Posterior vena cava (tissue), 2 donors: ENCODE measurements at regions of chr2 and their contacts with region 1.

Region 1: GRCh38 chr2:98664327-98664726 is 55.9 kb downstream of the UNC50 start:
- DNase-seq: no peak

Region 2: DNA sequence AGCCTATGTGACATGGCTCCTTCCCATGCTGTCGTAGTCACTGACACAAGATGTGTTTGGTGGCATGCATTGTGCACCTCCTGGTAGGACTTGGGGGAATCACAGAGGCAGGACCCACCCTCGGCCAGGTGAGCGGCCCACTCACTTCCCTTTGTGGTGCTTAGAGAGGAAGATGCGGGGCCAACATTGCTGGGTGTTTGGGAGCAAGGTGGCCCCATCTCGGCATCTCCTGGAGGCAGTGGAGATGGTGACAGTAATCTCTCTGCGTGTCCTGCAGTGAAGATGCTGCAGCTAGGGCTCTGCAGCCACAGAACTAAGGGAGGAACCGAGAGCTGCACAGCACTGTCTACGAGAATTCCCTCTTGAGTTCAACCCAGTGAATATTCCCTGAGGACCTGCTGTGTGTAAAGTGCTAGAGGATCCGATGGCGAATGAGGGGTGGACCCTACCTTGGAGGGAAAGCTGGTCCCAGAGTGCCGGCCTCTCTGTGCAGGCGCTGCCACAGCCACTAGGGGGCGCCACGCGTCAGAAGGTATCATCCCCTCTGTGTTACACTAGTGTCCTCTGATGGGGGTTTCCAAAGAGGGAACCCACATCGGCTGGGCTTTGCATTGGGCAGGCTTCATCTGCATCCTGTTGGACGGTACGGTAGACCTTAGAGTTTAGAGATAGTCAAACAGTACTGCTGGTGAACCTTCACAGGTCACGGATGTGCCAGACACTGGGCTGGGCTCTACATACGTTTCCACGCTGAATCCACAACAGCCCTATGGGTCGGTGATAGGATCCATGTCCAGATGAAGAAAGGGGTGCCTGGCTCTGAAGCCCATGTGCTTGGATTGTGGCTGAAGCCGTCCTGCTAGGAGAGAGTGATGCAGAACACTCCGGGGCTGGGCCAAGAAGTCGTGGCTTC is 95.2 kb before region 1 on chr2:
- intact Hi-C with region 1: no loop called
- DNase-seq: peak; percentile 88

Region 3: GRCh38 chr2:98787700-98788099 is 123.4 kb after region 1 on chr2:
- intact Hi-C with region 1: no loop called
- DNase-seq: peak; percentile 29

Region 4: DNA sequence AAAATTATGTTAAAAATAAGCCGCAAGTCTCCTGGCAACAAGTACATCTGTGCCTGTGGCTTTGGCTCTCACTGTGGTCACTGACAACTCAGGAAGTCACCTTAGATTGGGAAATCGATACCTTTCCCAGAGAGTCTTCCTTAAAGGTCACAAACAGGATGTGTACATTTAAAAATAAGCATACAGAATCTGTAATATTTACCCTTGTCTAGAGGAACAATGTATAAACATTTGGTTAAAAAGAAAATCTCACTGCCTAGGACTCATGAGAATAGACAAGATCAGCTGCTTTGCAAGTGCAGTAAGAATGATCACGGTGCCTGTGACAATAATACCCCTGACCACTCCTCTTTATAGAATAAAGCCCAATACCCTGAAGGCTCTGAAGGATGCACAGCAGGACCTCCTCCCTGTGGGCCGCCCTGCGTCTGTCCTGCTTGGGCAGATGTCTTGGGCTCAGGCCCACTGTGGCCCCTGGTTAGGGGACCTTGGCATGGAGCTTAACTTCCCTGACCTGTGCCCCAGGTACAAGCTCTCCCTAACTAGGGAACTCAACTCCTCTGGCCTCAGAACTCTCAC is 164.6 kb after region 1 on chr2:
- intact Hi-C with region 1: loop called in 1 of 2 experiments (anchors 5 kb)
- DNase-seq: no peak